PC-3 (cell line): ENCODE measurements at regions of chr12 and their contacts with region 1.

Region 1: DNA sequence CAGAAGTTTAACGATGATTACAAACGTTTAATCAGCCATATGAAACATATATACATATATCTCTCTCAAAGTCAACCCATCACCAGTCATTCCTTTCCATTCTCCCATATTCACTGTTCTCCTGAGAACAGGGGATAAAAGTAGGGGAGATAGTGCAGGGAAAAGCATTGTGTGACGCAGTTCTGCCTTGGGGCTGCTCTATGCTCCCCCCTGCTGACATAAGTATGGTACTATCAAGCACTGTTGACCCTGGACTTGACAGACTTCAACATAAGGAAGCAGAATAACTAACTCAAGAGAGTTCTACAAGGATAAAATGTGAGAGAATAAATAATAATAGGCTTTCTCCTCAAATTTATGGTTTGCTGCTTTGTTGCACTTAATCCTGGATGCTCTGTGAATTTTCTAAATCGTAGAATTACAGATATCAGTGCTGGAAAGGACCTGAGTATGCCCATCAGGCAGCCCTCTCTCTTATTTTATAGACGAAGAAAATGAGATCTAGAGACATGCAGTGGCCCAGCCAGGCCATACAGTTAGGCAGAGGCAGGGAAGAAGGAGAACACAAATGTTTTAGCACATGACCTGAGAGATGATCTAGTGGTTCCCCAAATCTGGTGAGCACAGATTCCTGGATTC is 87.2 kb downstream of the SCN8A start:
- DNase-seq: peak; percentile 69
- ATAC-seq: peak; percentile 97
- H3K4me3 ChIP-seq: no peak overlapping the region
- H3K27ac ChIP-seq: no peak overlapping the region
- H3K4me1 ChIP-seq: peaks cover 7% of the 10 kb centered on the region
- H3K27me3 ChIP-seq: no peaks in the 10 kb centered on the region
- CTCF ChIP-seq: peak; percentile 88

Region 2: GRCh38 chr12:51546097-51546496 is 132.1 kb before region 1 on chr12:
- CTCF ChIA-PET with region 1: no interaction called
- POLR2A ChIA-PET with region 1: no interaction called
- intact Hi-C with region 1: loop called (anchors 2 kb)
- DNase-seq: peak; percentile 36
- ATAC-seq: peak; percentile 90
- H3K4me3 ChIP-seq: no peak overlapping the region
- H3K27ac ChIP-seq: no peak overlapping the region
- H3K4me1 ChIP-seq: no peaks in the 10 kb centered on the region
- H3K27me3 ChIP-seq: no peaks in the 10 kb centered on the region
- CTCF ChIP-seq: no peak

Region 3: DNA sequence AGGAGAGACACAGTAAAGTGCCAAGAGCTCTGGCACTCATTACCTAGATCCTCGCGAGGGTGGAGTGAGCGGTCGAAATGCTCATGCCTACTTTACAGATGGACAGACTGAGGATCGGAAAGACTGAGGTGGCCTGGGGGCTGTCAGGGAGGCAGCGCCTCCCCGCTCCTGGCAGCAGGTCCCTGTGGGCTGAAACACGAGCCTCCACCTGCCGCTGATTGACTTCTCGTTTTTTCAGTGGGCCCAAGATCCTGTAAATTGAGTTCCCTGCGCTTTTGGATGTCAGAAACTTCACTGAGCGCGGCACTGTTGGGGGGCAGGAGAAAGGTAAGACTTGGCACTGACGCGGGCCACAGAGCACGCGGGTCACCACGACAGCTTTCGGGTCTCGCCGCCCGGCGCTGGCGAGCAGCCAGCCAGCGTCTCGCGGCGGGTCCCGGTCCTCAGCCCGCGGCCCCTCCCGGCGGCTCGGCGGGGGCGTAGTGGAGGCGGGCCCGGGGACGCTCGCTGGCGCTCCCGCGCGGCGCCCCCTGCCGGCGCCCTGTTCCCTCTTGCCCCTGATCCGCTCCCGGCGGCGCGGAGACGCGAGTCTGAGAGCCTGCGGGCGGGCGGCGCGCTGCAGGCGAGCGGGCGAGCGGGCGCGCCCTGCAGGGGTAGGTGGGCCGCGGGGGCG is 87.7 kb before region 1 on chr12:
- CTCF ChIA-PET with region 1: no interaction called
- POLR2A ChIA-PET with region 1: no interaction called
- intact Hi-C with region 1: loop called (anchors 1 kb)
- DNase-seq: peak; percentile 86
- ATAC-seq: peak; percentile 75
- H3K4me3 ChIP-seq: peak overlapping the region; percentile 83
- H3K27ac ChIP-seq: no peak overlapping the region
- H3K4me1 ChIP-seq: peaks cover 24% of the 10 kb centered on the region
- H3K27me3 ChIP-seq: no peaks in the 10 kb centered on the region
- CTCF ChIP-seq: peak; percentile 33; the same call in 1 of the 2 replicates

Region 4: GRCh38 chr12:51647647-51648046 is 30.6 kb before region 1 on chr12:
- CTCF ChIA-PET with region 1: no interaction called
- POLR2A ChIA-PET with region 1: no interaction called
- intact Hi-C with region 1: no loop called
- DNase-seq: no peak
- ATAC-seq: no peak
- H3K4me3 ChIP-seq: no peak overlapping the region
- H3K27ac ChIP-seq: no peak overlapping the region
- H3K4me1 ChIP-seq: no peaks in the 10 kb centered on the region
- H3K27me3 ChIP-seq: no peaks in the 10 kb centered on the region
- CTCF ChIP-seq: no peak